ENCODE measurements at regions of chr1 and their contacts with region 1.

Region 1: GRCh38 chr1:111507411-111508201 is 4.2 kb upstream of the ADORA3 start:
- DNase-seq: peak; percentile 86
- H3K4me3 Mint-ChIP-seq: peak overlapping the region; percentile 65
- H3K27ac Mint-ChIP-seq: peak overlapping the region; percentile 89
- H3K4me1 Mint-ChIP-seq: peaks cover 56% of the 10 kb centered on the region
- H3K27me3 Mint-ChIP-seq: no peaks in the 10 kb centered on the region

Region 2: DNA sequence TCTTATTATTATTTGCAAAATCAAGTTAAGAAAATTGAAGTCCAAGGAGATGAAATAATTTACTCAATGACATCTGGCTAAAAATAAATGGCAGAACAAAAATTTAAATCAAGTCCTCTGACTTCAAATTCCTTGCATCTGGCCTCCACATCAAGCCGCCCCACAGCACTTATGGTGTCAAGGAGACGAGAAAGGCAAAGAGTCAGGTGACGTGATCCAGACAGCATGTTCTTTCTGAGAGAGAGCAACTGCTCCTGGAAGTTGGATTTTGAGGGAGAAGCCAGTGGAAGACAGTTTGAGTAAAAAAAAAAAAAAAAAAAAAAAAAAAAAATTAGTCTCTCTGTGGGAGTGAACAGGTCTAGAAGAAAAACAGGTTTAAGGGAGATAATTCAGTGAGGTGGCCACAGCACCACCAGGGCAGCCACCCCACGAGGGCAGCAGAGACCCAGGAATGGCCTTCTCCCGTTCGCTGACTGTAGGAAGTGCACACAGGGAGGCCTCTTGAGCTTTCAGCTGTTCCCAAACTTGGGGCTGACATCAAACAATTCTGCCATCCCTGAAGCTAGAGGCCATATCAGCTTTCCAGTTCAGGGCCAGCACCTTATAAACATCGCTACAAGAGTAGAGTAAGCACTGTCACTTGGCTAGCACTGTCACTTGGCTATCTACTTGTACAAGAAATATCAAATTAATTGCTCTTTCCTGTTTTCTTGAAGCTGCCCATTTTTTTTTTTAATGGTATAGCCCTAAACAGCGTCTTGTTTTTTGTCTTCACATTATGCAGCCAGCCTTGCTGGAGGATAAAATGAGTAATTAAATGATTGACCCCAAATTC is 26.0 kb before region 1 on chr1:
- CTCF ChIA-PET with region 1: interaction called, 90 read pairs
- POLR2A ChIA-PET with region 1: interaction called, 175 read pairs
- DNase-seq: peak; percentile 69
- H3K4me3 Mint-ChIP-seq: no peak overlapping the region
- H3K27ac Mint-ChIP-seq: no peak overlapping the region
- H3K4me1 Mint-ChIP-seq: peaks cover 23% of the 10 kb centered on the region
- H3K27me3 Mint-ChIP-seq: peaks cover 42% of the 10 kb centered on the region

Region 3: DNA sequence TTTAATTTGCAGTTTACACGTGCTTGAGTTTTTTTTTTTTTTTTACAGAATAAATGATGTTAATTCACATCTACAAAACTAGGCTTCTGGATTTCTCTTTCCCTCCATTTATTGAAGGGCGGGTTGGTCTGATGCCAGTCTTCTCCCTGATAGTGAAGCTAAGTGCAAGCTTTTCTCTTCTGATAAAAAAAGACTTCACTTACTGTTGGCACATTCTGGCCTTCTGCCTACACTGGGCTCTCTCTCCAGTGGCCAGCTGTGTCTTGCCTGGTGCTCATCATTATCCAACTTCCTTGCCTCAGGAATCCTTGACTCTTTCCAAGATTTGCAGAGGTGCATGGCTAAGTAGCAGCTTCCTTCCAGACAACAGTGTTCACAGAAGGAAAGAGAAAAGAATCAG is 104.4 kb after region 1 on chr1:
- CTCF ChIA-PET with region 1: interaction called, 26 read pairs
- POLR2A ChIA-PET with region 1: interaction called, 31 read pairs
- DNase-seq: no peak
- H3K4me3 Mint-ChIP-seq: no peak overlapping the region
- H3K27ac Mint-ChIP-seq: no peak overlapping the region
- H3K4me1 Mint-ChIP-seq: peaks cover 23% of the 10 kb centered on the region
- H3K27me3 Mint-ChIP-seq: no peaks in the 10 kb centered on the region

Region 4: DNA sequence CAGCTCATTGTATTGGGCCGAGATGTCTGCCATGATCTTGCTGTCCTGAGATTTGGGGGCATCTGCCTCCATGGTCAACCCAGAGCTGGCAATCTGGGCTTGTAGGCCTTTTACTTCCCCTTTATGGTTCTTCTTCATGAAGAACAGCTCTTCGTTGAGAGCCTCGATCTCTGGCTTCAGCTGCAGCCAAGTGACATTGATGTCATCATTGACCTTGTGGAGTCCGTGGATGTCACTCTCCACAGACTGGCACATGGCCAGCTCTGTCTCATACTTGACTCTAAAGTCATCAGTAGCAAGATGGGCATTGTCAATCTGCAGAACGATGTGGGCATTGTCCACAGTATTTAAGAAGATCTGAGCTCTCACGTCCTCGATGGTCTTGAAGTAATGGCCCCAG is 141.2 kb after region 1 on chr1:
- CTCF ChIA-PET with region 1: interaction called, 22 read pairs
- POLR2A ChIA-PET with region 1: interaction called, 10 read pairs
- DNase-seq: no peak
- H3K4me3 Mint-ChIP-seq: no peak overlapping the region
- H3K27ac Mint-ChIP-seq: no peak overlapping the region
- H3K4me1 Mint-ChIP-seq: peaks cover 71% of the 10 kb centered on the region
- H3K27me3 Mint-ChIP-seq: no peaks in the 10 kb centered on the region

Region 5: DNA sequence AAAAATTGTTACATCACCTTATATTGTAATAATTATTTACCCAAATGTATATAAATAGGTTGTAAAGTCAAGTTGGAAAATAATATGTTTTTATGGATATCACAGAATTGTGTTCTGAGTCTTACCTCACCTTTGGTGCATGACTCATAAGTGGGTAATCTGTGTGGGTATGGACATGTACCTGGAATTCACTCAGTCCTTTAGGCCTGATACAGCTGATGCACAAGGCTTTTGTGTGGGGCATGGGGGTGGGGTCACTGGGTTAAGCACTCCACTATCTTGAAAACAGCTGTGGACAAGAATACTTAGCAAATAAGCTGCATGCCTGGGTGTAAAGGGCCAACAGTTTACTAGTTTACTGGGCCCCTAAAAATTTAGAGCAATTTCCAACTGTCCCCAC is 197.2 kb after region 1 on chr1:
- CTCF ChIA-PET with region 1: interaction called, 28 read pairs
- POLR2A ChIA-PET with region 1: interaction called, 9 read pairs
- DNase-seq: no peak
- H3K4me3 Mint-ChIP-seq: no peak overlapping the region
- H3K27ac Mint-ChIP-seq: no peak overlapping the region
- H3K4me1 Mint-ChIP-seq: peaks cover 63% of the 10 kb centered on the region
- H3K27me3 Mint-ChIP-seq: no peaks in the 10 kb centered on the region

Region 6: GRCh38 chr1:111747282-111747734 is 239.7 kb after region 1 on chr1:
- CTCF ChIA-PET with region 1: interaction called, 53 read pairs
- POLR2A ChIA-PET with region 1: interaction called, 18 read pairs
- DNase-seq: peak; percentile 79
- H3K4me3 Mint-ChIP-seq: no peak overlapping the region
- H3K27ac Mint-ChIP-seq: no peak overlapping the region
- H3K4me1 Mint-ChIP-seq: peaks cover 12% of the 10 kb centered on the region
- H3K27me3 Mint-ChIP-seq: peaks cover 20% of the 10 kb centered on the region